ENCODE measurements at regions of chr17 and their contacts with region 1.

Region 1: DNA sequence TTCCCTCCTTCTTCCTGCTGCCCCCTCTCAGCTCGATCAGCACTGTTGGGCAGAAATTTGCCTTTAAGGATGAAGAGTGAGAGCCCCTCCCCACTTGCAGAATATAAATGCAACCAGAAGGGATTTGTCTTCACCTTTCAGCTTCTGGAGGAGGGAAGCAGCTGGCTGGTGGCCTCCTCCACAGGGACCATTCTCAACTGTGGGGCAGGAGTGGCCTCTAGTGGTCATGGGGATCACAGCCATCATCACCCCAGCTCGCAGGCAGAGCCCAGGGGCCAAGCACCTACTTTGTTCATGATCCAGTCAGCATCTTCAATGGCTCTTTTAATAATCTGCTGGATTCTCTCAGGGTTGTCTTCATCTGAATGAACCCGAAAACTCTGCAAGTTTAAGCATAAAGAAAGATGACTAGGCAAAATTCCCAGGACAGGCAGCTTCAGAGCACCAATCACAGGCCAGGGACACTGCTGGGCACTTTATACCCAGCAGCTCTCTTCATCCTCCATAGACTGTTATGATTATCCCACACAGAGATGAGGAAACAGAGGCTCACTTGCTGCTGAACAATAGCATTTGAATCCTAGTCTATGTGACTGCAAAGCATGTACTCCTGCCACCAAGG is 13.1 kb downstream of the LYRM9 start:
- DNase-seq: peak; percentile 92
- H3K4me3 Mint-ChIP-seq: no peak overlapping the region
- H3K27ac Mint-ChIP-seq: no peak overlapping the region
- H3K4me1 Mint-ChIP-seq: peaks cover 24% of the 10 kb centered on the region
- H3K27me3 Mint-ChIP-seq: peaks cover 4% of the 10 kb centered on the region

Region 2: DNA sequence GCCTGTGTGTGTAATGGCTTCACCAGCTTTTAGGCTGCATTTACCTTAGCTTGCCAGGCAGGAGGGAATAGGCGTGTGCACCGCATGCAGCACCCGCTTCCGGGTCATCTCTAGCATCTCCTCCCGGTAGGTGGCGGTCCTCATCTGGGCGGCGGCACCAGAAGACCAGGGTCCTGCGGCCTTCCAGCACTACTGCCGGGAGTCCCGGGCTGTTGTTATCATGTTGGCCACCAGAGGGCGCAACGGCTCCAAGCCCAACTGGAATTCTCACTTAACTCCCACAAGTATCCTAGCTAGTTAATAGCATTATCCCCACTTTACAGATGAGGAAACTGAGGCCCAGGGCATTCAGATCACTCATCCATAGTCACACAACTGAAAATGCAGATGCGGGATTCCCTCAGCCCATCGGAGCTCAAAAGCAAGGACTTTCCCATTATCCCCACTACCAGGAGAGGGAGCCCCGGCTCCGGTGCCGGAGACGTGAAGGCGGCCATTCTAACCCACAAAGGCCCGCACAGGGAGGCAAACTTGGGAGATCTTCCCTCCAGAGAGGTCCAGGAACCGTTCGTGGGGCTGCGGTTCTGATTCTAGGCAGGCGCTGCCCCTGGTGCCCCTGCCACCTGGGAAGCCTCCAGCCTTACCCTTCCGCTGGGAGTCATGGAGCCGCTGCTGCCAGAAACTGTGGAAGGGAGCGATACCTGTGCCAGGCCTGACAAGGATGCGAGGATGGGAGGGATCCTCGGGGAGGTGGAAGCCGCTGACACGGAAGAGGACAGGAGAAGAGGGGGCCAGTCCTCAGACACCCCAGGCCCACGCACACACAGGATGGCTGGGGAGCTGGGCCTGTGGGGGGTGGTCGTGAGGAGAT is 225.2 kb before region 1 on chr17:
- intact Hi-C with region 1: loop called (anchors 2 kb)
- DNase-seq: peak; percentile 90
- H3K4me3 Mint-ChIP-seq: no peak overlapping the region
- H3K27ac Mint-ChIP-seq: peak overlapping the region; percentile 51
- H3K4me1 Mint-ChIP-seq: peaks cover 9% of the 10 kb centered on the region
- H3K27me3 Mint-ChIP-seq: no peaks in the 10 kb centered on the region

Region 3: GRCh38 chr17:27760069-27760885 is 119.8 kb before region 1 on chr17:
- intact Hi-C with region 1: loop called (anchors 1 kb)
- DNase-seq: peak; percentile 91
- H3K4me3 Mint-ChIP-seq: no peak overlapping the region
- H3K27ac Mint-ChIP-seq: no peak overlapping the region
- H3K4me1 Mint-ChIP-seq: peaks cover 1% of the 10 kb centered on the region
- H3K27me3 Mint-ChIP-seq: no peaks in the 10 kb centered on the region

Region 4: DNA sequence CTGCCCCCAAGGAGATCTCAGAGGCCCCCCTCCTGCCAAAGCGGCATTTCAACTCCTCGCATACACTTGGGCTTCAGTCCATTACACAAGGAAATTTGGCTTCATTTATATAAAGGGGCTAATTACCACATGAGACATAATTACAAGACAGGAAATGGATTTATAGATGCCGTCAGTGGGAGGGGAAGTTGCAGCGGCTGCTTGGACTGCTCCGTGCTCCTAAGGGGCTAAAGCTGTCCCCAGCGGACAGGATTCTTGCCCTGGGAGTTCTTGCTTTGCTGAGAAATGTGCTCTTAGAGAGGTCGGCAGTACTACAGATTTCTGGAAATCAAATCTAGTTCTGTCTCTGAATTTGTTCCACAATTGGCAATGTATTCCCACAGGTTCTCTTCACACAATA is 105.2 kb after region 1 on chr17:
- intact Hi-C with region 1: no loop called
- DNase-seq: no peak
- H3K4me3 Mint-ChIP-seq: no peak overlapping the region
- H3K27ac Mint-ChIP-seq: no peak overlapping the region
- H3K4me1 Mint-ChIP-seq: peaks cover 5% of the 10 kb centered on the region
- H3K27me3 Mint-ChIP-seq: peaks cover 20% of the 10 kb centered on the region

Measured in activated CD4-positive, alpha-beta T cell treated with anti-CD3 and anti-CD28 coated beads, Interleukin-2, amount 10 ng/mL, durations not matched to agents 24 days and 14 days (primary cell).